GM12878 (cell line): ENCODE measurements at regions of chr14 and their contacts with region 1.

Region 1: GRCh38 chr14:103333754-103334643 is at the start of gene EIF5:
- DNase-seq: peak; percentile 95
- ATAC-seq: peak; percentile 95
- H3K4me3 ChIP-seq: peak within 1 kb of the TSS; percentile 99
- H3K27ac ChIP-seq: peak within 1 kb of the TSS; percentile 98
- H3K4me1 ChIP-seq: peaks cover 25% of the 10 kb centered on the region; the same call in 1 of the 2 replicates
- H3K27me3 ChIP-seq: no peaks in the 10 kb centered on the region
- CTCF ChIP-seq: peak in 1 of 3 experiments; percentile 17; a peak in 1 of 6 replicates
- EP300 ChIP-seq: no peak; a peak in 1 of 4 replicates
- POLR2A ChIP-seq: peak; percentile 98
- RAD21 ChIP-seq: no peak
- polyA plus RNA-seq, gene EIF5: 51.2 to 80.9 TPM

Region 2: GRCh38 chr14:103385152-103385993 is 51.4 kb after region 1 on chr14 and contains the start of gene MARK3:
- CTCF ChIA-PET with region 1: interaction called, 38 read pairs
- POLR2A ChIA-PET with region 1: interaction called, 3 read pairs
- RAD21 ChIA-PET with region 1: interaction called, 10 read pairs
- SMC1A ChIA-PET with region 1: interaction called, 6 read pairs
- in situ Hi-C with region 1: no loop called
- intact Hi-C with region 1: loop called (anchors 5 kb)
- DNase-seq: peak; percentile 64
- ATAC-seq: peak; percentile 95
- H3K4me3 ChIP-seq: peak within 1 kb of the TSS; percentile 91
- H3K27ac ChIP-seq: peak within 1 kb of the TSS; percentile 86
- H3K4me1 ChIP-seq: peaks cover 13% of the 10 kb centered on the region
- H3K27me3 ChIP-seq: no peaks in the 10 kb centered on the region
- CTCF ChIP-seq: peak in 2 of 3 experiments; percentile 7 to 14; a peak in 2 of 6 replicates
- EP300 ChIP-seq: no peak
- POLR2A ChIP-seq: peak; percentile 96
- RAD21 ChIP-seq: no peak
- polyA plus RNA-seq, gene MARK3: 10.7 to 19.8 TPM

Region 3: GRCh38 chr14:103444837-103445524 is 111.0 kb after region 1 on chr14:
- CTCF ChIA-PET with region 1: no interaction called
- POLR2A ChIA-PET with region 1: no interaction called
- RAD21 ChIA-PET with region 1: no interaction called
- SMC1A ChIA-PET with region 1: no interaction called
- in situ Hi-C with region 1: no loop called
- intact Hi-C with region 1: no loop called
- DNase-seq: no peak
- ATAC-seq: no peak
- H3K4me3 ChIP-seq: no peak overlapping the region
- H3K27ac ChIP-seq: no peak overlapping the region
- H3K4me1 ChIP-seq: peaks cover 4% of the 10 kb centered on the region; the same call in 1 of the 2 replicates
- H3K27me3 ChIP-seq: no peaks in the 10 kb centered on the region
- CTCF ChIP-seq: no peak
- EP300 ChIP-seq: no peak
- POLR2A ChIP-seq: no peak
- RAD21 ChIP-seq: no peak